GM12878 (cell line): ENCODE measurements at regions of chr17 and their contacts with region 1.

Region 1: GRCh38 chr17:72452286-72453173 is 331.7 kb downstream of the SOX9 start:
- DNase-seq: no peak
- ATAC-seq: peak; percentile 84
- H3K4me3 ChIP-seq: no peak overlapping the region
- H3K27ac ChIP-seq: no peak overlapping the region
- H3K4me1 ChIP-seq: no peaks in the 10 kb centered on the region
- H3K27me3 ChIP-seq: no peaks in the 10 kb centered on the region; a peak in 1 of 4 replicates
- CTCF ChIP-seq: no peak
- EP300 ChIP-seq: no peak
- POLR2A ChIP-seq: no peak
- RAD21 ChIP-seq: no peak

Region 2: DNA sequence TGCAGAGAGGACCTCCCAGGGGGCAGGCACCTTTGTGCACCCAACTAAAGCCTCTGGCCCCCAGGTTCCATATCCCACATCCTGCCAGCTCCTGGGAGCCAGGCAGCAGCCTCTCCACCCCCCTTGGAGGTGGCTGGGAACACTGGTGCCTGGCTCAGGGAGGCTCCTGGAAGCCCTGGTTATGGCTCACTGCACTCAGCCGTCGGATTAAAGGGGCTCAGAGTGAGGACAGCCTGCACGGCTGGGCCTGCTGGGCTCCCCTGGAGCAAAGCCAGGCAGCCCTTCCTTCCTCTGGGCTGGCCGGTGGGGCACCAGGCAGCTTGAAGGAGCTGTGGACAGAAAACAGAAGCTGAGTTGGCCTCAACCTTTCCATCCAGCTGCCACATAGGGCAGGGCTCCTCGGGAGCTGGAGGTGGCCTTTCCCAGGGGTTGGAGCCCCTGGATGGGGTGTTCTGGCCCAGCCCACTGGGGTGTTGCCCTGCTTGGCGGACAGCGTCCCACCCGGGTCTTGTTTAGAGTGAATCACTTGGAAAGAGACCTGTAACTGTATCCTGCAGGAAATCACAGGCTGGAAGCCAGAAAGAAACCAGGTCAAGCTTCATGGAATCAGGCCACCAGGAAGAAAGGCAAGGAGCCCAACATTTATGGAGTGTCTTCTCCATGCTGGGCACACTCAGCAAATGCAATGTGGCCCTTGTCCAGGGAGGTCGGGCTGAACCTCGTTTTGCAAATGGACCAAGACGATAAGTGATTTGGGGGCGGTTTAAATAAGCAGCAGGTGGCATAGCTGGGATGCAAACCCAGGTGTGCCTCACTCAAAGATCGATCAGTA is 78.4 kb before region 1 on chr17:
- CTCF ChIA-PET with region 1: no interaction called
- POLR2A ChIA-PET with region 1: no interaction called
- RAD21 ChIA-PET with region 1: no interaction called
- SMC1A ChIA-PET with region 1: no interaction called
- in situ Hi-C with region 1: no loop called
- intact Hi-C with region 1: no loop called
- DNase-seq: no peak
- ATAC-seq: no peak
- H3K4me3 ChIP-seq: no peak overlapping the region
- H3K27ac ChIP-seq: no peak overlapping the region
- H3K4me1 ChIP-seq: no peaks in the 10 kb centered on the region
- H3K27me3 ChIP-seq: no peaks in the 10 kb centered on the region
- CTCF ChIP-seq: no peak
- EP300 ChIP-seq: no peak
- POLR2A ChIP-seq: no peak
- RAD21 ChIP-seq: no peak

Region 3: GRCh38 chr17:72426948-72427760 is 25.4 kb before region 1 on chr17:
- CTCF ChIA-PET with region 1: interaction called, 5 read pairs
- POLR2A ChIA-PET with region 1: interaction called, 5 read pairs
- RAD21 ChIA-PET with region 1: interaction called, 4 read pairs
- SMC1A ChIA-PET with region 1: interaction called, 10 read pairs
- in situ Hi-C with region 1: no loop called
- intact Hi-C with region 1: no loop called
- DNase-seq: no peak
- ATAC-seq: no peak
- H3K4me3 ChIP-seq: no peak overlapping the region
- H3K27ac ChIP-seq: peak overlapping the region; percentile 21; the same call in 1 of the 2 replicates
- H3K4me1 ChIP-seq: peaks cover 33% of the 10 kb centered on the region
- H3K27me3 ChIP-seq: no peaks in the 10 kb centered on the region
- CTCF ChIP-seq: no peak
- EP300 ChIP-seq: no peak
- POLR2A ChIP-seq: no peak
- RAD21 ChIP-seq: no peak; the same call in 1 of the 2 replicates

Region 4: GRCh38 chr17:72432143-72432621 is 20.3 kb before region 1 on chr17:
- CTCF ChIA-PET with region 1: interaction called, 5 read pairs
- POLR2A ChIA-PET with region 1: interaction called, 12 read pairs
- RAD21 ChIA-PET with region 1: interaction called, 4 read pairs
- SMC1A ChIA-PET with region 1: interaction called, 5 read pairs
- in situ Hi-C with region 1: no loop called
- intact Hi-C with region 1: no loop called
- DNase-seq: no peak
- ATAC-seq: no peak
- H3K4me3 ChIP-seq: no peak overlapping the region
- H3K27ac ChIP-seq: no peak overlapping the region
- H3K4me1 ChIP-seq: no peaks in the 10 kb centered on the region
- H3K27me3 ChIP-seq: no peaks in the 10 kb centered on the region
- CTCF ChIP-seq: no peak
- EP300 ChIP-seq: no peak
- POLR2A ChIP-seq: no peak
- RAD21 ChIP-seq: no peak

Region 5: DNA sequence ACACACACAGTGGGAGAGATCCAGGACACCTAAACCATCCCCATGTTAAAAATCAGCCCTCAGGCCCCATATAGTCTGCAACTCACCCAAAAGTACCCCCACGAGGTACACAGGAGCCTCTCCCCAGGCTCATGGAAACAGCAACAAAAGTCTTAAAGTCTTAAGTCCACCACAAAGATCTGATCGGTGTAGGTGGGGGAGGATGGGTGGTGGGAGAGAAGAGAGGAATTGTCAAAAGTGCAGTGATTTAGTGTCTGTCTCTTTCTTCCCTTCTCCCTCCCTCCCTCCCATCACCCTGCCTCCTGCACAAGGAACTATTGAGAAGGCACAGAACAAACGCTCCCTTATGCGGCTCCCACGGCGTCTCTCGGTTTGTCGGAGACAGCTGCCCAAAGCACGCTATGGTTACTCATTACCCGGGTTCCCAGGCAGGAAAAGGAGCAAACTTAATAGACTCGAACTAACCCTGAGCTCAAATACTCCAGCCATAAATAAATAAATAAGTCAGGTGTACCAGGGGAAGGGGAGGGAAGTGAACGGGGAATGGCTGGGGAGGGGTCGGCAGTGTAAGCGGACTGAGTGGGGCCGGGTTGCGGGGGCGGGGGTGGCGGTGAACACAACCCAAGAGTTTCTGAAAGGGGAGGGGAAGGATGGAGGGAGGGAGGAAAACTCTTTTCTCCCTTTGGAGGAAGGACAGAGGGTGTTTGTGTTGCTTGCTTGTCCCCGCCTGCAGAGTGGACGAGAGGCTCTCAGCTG is 162.5 kb after region 1 on chr17:
- CTCF ChIA-PET with region 1: no interaction called
- POLR2A ChIA-PET with region 1: no interaction called
- RAD21 ChIA-PET with region 1: no interaction called
- SMC1A ChIA-PET with region 1: no interaction called
- in situ Hi-C with region 1: no loop called
- intact Hi-C with region 1: no loop called
- DNase-seq: no peak
- ATAC-seq: peak; percentile 73
- H3K4me3 ChIP-seq: no peak overlapping the region
- H3K27ac ChIP-seq: no peak overlapping the region
- H3K4me1 ChIP-seq: no peaks in the 10 kb centered on the region
- H3K27me3 ChIP-seq: no peaks in the 10 kb centered on the region
- CTCF ChIP-seq: no peak
- EP300 ChIP-seq: peak; percentile 75 to 89; a peak in 3 of 4 replicates
- POLR2A ChIP-seq: no peak
- RAD21 ChIP-seq: no peak